ENCODE measurements at regions of chr9 and their contacts with region 1.

Region 1: GRCh38 chr9:88578121-88579054 is 43.4 kb downstream of the NXNL2 start:
- DNase-seq: peak; percentile 95

Region 2: DNA sequence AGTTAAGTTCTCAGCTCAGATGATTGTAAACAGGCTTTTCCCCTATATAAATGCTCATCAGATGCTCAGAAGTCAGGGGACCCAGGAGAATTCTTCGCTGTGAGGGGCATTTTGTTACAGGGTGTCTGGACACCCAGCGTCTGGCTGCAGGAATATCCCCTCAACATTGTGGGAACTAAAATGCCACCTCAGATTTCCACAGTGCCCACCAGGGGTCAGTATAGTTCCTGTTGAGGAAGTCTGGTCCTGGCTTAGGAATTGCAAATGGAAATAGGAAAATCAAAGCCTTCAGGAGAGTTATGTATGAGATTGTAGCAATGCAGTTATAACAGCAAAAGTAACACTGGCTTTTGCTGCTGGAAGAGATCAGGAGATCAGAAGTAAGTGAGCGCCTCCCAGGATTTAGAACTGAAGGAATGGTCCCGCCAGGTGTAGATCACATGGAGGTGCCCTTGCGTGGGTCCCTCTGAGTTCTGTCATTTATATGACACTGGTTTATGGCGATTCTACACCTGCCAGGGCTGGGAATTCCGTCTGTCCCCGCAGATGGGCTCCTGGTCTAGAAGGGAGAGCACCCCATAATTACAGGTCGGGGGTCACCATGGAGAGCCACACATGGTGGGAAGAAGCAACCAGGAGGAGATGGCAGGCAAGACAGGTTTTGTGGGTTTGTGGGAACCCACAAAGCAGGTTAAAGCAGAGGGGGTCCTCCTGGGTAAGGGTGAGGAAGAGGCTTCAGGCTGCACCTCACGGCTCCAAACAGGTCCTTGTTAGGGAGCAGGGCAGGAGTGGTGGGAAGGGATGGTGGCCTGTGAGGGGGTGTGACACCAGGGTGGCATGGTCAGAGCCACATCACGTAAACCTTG is 899.5 kb before region 1 on chr9:
- intact Hi-C with region 1: loop called in 1 of 2 experiments (anchors 10 kb)
- DNase-seq: no peak

Region 3: GRCh38 chr9:88106491-88106890 is 471.9 kb before region 1 on chr9:
- intact Hi-C with region 1: loop called (anchors 10 kb)
- DNase-seq: no peak

Region 4: DNA sequence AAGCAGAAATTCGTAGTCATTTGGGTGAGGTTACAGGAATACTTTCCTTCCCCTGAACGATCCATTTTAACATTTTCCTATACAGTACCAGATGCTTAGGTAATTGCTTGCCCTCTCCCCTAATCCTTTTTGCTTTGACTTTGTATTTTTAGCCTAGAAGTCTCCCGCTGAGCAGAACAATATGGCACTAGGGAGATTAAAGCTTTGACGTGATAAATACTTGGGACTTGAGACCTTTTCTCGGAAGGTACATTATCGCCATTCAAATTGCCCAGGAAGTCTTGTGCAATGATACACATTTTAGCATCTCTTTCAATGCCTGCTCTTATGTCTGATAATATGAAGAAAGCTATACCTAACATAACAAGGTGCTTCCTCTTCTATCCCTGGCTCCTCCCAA is 417.2 kb before region 1 on chr9:
- intact Hi-C with region 1: loop called in 1 of 2 experiments (anchors 10 kb)
- DNase-seq: no peak

Region 5: GRCh38 chr9:88388172-88388885 is 190.1 kb before region 1 on chr9 and contains the start of gene SPIN1:
- intact Hi-C with region 1: loop called in 1 of 2 experiments (anchors 10 kb)
- DNase-seq: peak; percentile 95
- total RNA-seq, gene SPIN1: 76.4 to 78.2 TPM

Region 6: GRCh38 chr9:88791105-88791805 is 212.9 kb after region 1 on chr9:
- intact Hi-C with region 1: no loop called
- DNase-seq: no peak

Region 7: DNA sequence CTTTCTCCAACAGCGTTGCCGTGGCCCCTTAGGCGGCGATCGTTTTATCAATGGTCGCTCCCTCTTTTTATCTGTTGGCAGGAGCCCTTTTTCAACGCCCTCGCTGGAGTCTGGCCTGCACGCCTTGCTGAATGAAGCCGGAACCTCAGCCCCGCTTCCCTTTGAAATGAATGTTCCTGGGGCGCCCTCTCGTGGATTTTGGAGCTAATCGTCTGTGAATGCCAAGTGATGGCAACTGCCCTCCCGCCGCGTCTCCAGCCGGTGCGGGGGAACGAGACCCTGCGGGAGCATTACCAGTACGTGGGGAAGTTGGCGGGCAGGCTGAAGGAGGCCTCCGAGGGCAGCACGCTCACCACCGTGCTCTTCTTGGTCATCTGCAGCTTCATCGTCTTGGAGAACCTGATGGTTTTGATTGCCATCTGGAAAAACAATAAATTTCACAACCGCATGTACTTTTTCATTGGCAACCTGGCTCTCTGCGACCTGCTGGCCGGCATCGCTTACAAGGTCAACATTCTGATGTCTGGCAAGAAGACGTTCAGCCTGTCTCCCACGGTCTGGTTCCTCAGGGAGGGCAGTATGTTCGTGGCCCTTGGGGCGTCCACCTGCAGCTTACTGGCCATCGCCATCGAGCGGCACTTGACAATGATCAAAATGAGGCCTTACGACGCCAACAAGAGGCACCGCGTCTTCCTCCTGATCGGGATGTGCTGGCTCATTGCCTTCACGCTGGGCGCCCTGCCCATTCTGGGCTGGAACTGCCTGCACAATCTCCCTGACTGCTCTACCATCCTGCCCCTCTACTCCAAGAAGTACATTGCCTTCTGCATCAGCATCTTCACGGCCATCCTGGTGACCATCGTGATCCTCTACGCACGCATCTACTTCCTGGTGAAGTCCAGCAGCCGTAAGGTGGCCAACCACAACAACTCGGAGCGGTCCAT is 422.9 kb after region 1 on chr9:
- intact Hi-C with region 1: no loop called
- DNase-seq: peak; percentile 96

Measured in posterior vena cava (tissue), 2 donors.